Activated CD4-positive, alpha-beta T cell treated with anti-CD3 and anti-CD28 coated beads, Interleukin-2, amount 10 ng/mL, durations not matched to agents 24 days and 14 days (primary cell): ENCODE measurements at regions of chr13 and their contacts with region 1.

Region 1: GRCh38 chr13:68369739-68370138 is 1139.6 kb upstream of the PCDH9 start:
- DNase-seq: no peak
- H3K4me3 Mint-ChIP-seq: no peak overlapping the region
- H3K27ac Mint-ChIP-seq: no peak overlapping the region
- H3K4me1 Mint-ChIP-seq: no peaks in the 10 kb centered on the region
- H3K27me3 Mint-ChIP-seq: no peaks in the 10 kb centered on the region

Region 2: DNA sequence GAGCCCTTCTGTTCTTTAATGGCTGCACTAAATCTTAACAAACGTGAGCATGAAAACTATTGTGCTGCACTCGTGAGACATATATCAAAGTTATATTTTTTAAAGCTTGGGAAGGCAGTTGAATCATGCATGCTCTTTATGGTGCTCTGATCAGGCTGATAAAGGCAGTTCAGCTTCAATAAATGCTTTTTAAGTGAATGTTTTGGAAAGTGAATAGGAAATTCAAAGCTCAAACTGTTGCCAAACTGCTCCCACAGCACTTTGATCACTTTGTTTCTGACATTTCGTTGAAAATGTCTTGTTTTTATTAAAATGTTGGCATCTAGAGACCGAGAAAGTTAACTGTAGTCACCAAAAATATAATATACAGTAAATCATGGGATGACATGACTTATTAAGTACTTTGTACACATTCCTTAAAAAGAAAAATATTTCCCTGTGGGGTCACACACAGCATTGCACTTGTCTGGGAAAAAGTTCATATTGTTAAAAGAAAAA is 513.9 kb before region 1 on chr13:
- intact Hi-C with region 1: loop called (anchors 10 kb)
- DNase-seq: no peak
- H3K4me3 Mint-ChIP-seq: no peak overlapping the region
- H3K27ac Mint-ChIP-seq: no peak overlapping the region
- H3K4me1 Mint-ChIP-seq: no peaks in the 10 kb centered on the region
- H3K27me3 Mint-ChIP-seq: no peaks in the 10 kb centered on the region

Region 3: GRCh38 chr13:68428292-68428691 is 58.6 kb after region 1 on chr13:
- intact Hi-C with region 1: no loop called
- DNase-seq: no peak
- H3K4me3 Mint-ChIP-seq: no peak overlapping the region
- H3K27ac Mint-ChIP-seq: no peak overlapping the region
- H3K4me1 Mint-ChIP-seq: no peaks in the 10 kb centered on the region
- H3K27me3 Mint-ChIP-seq: no peaks in the 10 kb centered on the region